ENCODE measurements at regions of chr5 and their contacts with region 1.

Region 1: GRCh38 chr5:148374692-148375360 is 8.9 kb upstream of the FBXO38 start:
- DNase-seq: peak; percentile 29
- H3K4me3 Mint-ChIP-seq: no peak overlapping the region
- H3K27ac Mint-ChIP-seq: no peak overlapping the region
- H3K4me1 Mint-ChIP-seq: peaks cover 6% of the 10 kb centered on the region
- H3K27me3 Mint-ChIP-seq: no peaks in the 10 kb centered on the region

Region 2: GRCh38 chr5:147949711-147950573 is 424.9 kb before region 1 on chr5:
- CTCF ChIA-PET with region 1: no interaction called
- intact Hi-C with region 1: loop called (anchors 1 kb)
- DNase-seq: no peak
- H3K4me3 Mint-ChIP-seq: no peak overlapping the region
- H3K27ac Mint-ChIP-seq: no peak overlapping the region
- H3K4me1 Mint-ChIP-seq: no peaks in the 10 kb centered on the region
- H3K27me3 Mint-ChIP-seq: peaks cover 2% of the 10 kb centered on the region

Region 3: DNA sequence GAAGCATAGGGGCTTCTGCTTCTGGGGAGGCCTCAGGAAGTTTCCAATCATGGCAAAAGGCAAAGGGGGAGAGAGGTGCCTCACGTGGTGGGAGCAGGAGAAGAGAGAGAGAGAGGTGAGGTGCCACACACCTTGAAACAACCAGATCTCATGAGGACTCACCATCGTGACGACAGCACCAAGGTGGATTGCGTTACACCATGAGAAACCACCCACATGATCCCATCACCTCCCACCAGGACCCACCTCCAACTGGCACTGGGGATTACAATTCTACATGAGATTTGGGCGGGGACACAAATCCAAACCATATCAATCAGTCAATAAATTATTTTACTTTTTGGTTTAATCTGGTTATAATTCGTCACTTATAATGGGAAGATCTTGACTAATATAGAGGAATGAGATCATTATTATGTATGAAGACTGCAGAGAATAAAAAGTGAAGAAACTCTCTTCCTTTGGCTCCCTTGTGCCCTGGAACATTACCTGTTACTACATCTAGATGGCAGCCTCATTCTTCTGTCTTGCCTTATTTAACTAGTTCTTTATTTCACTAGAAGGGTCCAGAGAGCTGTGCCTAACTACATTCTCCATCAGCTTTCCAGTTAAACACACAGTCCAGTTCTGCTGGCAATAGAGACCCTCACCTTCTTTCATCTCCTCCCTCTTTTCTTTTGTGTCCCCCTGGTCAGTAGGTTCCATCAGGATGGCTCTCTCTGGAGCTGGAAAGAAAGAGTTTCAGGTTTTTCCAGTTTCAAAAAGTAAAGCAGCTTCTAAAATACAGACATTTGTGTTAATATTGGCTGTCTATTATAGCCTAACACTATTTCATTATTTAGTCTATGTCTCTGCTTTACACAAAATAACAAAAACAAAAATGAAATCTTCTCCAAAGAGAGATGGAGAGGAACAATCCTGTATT is 84.3 kb before region 1 on chr5:
- CTCF ChIA-PET with region 1: no interaction called
- intact Hi-C with region 1: loop called (anchors 1 kb)
- DNase-seq: no peak
- H3K4me3 Mint-ChIP-seq: no peak overlapping the region
- H3K27ac Mint-ChIP-seq: no peak overlapping the region
- H3K4me1 Mint-ChIP-seq: no peaks in the 10 kb centered on the region
- H3K27me3 Mint-ChIP-seq: no peaks in the 10 kb centered on the region